ENCODE measurements at regions of chr7 and their contacts with region 1.

Region 1: GRCh38 chr7:135936530-135937217 is 40.5 kb downstream of the MTPN start:
- DNase-seq: peak in 1 of 2 experiments; percentile 54
- H3K4me3 ChIP-seq: no peak overlapping the region
- H3K4me3 Mint-ChIP-seq: peak overlapping the region; percentile 18
- H3K27ac Mint-ChIP-seq: no peak overlapping the region
- H3K4me1 ChIP-seq: peaks cover 52% of the 10 kb centered on the region
- H3K4me1 Mint-ChIP-seq: peaks cover 49% of the 10 kb centered on the region
- H3K27me3 ChIP-seq: no peaks in the 10 kb centered on the region
- H3K27me3 Mint-ChIP-seq: no peaks in the 10 kb centered on the region
- CTCF ChIP-seq: no peak

Region 2: DNA sequence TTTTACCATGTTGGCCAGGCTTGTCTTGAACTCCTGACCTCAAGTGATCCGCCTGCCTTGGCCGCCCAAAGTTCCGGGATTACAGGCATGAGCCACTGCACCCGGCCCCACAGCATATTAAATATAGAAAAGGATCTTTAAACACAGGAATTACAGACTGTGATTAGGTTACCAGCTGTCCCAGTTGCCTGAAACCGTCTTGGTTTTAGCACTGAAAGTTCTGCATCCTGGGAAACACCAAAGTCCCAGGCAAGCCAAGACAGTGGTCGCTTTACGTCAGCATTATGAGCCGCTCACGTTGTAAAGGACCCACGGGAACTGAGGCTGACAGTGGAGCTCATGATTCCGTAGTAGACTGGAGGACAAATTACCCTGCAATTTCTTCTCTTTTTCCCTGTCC is 119.1 kb before region 1 on chr7:
- CTCF ChIA-PET with region 1: no interaction called
- POLR2A ChIA-PET with region 1: no interaction called
- intact Hi-C with region 1: no loop called
- DNase-seq: no peak
- H3K4me3 ChIP-seq: no peak overlapping the region
- H3K4me3 Mint-ChIP-seq: no peak overlapping the region
- H3K27ac Mint-ChIP-seq: no peak overlapping the region
- H3K4me1 ChIP-seq: no peaks in the 10 kb centered on the region
- H3K4me1 Mint-ChIP-seq: no peaks in the 10 kb centered on the region
- H3K27me3 ChIP-seq: no peaks in the 10 kb centered on the region
- H3K27me3 Mint-ChIP-seq: no peaks in the 10 kb centered on the region
- CTCF ChIP-seq: no peak

Region 3: GRCh38 chr7:135843214-135843613 is 93.5 kb before region 1 on chr7:
- CTCF ChIA-PET with region 1: no interaction called
- POLR2A ChIA-PET with region 1: no interaction called
- intact Hi-C with region 1: no loop called
- DNase-seq: no peak
- H3K4me3 ChIP-seq: no peak overlapping the region
- H3K4me3 Mint-ChIP-seq: no peak overlapping the region
- H3K27ac Mint-ChIP-seq: no peak overlapping the region
- H3K4me1 ChIP-seq: no peaks in the 10 kb centered on the region
- H3K4me1 Mint-ChIP-seq: peaks cover 9% of the 10 kb centered on the region
- H3K27me3 ChIP-seq: no peaks in the 10 kb centered on the region
- H3K27me3 Mint-ChIP-seq: no peaks in the 10 kb centered on the region
- CTCF ChIP-seq: no peak

Region 4: DNA sequence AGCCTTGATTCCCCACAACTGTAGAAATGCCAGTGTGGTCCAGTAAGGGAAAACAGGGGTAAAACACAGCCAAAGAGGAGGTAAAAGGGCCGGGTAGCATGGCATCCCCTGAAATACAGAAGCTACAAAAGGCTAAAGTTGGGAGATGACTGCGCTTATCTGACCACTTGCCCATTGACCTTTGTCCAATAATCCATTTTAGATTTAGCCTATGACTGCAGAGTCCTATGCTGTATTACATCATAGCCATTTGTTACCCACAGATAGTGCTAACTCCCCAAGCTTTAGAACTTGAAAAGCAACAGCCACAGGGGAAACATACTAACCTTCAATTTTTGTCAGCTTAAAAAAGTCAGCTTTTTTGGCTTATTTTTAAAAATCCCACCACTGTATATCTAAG is 14.3 kb after region 1 on chr7:
- CTCF ChIA-PET with region 1: interaction called, 4 read pairs
- POLR2A ChIA-PET with region 1: no interaction called
- intact Hi-C with region 1: loop called (anchors 1 kb)
- DNase-seq: no peak
- H3K4me3 ChIP-seq: no peak overlapping the region
- H3K4me3 Mint-ChIP-seq: no peak overlapping the region
- H3K27ac Mint-ChIP-seq: no peak overlapping the region
- H3K4me1 ChIP-seq: peaks cover 10% of the 10 kb centered on the region; the same call in 1 of the 2 replicates
- H3K4me1 Mint-ChIP-seq: peaks cover 6% of the 10 kb centered on the region
- H3K27me3 ChIP-seq: no peaks in the 10 kb centered on the region
- H3K27me3 Mint-ChIP-seq: no peaks in the 10 kb centered on the region
- CTCF ChIP-seq: no peak

Region 5: GRCh38 chr7:135965602-135966001 is 28.9 kb after region 1 on chr7:
- CTCF ChIA-PET with region 1: no interaction called
- POLR2A ChIA-PET with region 1: no interaction called
- intact Hi-C with region 1: no loop called
- DNase-seq: no peak
- H3K4me3 ChIP-seq: no peak overlapping the region
- H3K4me3 Mint-ChIP-seq: no peak overlapping the region
- H3K27ac Mint-ChIP-seq: no peak overlapping the region
- H3K4me1 ChIP-seq: peaks cover 10% of the 10 kb centered on the region; the same call in 1 of the 2 replicates
- H3K4me1 Mint-ChIP-seq: peaks cover 8% of the 10 kb centered on the region
- H3K27me3 ChIP-seq: no peaks in the 10 kb centered on the region
- H3K27me3 Mint-ChIP-seq: no peaks in the 10 kb centered on the region
- CTCF ChIP-seq: no peak

Region 6: DNA sequence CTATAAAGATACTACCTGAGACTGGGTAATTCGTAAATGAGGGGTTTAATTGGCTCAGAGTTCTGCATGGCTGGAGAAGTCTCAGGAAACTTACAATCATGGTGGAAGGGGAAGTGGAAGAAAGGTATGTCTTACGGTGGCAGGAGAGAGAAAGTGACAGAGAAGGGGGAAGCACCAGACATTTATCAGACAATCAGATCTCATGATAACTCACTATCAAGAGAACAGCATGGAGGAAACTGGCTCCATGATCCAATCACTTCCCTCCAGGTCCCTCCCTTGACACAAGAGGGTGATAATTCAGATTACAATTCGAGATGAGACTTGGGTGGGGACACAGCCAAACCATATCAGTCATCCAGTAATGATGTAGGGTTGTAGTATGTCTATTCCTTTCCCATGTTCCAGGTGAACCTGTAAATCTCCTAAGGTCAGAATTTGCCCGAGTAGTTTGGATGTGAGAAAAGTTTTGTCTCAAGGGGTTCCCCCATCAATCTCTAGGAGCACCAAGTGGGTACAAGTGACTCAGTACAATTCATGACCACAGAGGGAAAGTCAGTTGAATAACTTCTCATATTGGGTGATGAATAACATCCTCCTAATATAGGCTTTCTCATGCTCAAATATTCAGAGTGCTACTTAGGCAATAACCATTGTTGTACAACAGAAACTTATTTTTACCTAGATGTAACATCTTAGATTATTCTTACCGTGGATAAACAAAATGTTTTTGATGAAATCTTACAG is 80.1 kb after region 1 on chr7:
- CTCF ChIA-PET with region 1: no interaction called
- POLR2A ChIA-PET with region 1: no interaction called
- intact Hi-C with region 1: no loop called
- DNase-seq: no peak
- H3K4me3 ChIP-seq: no peak overlapping the region
- H3K4me3 Mint-ChIP-seq: no peak overlapping the region
- H3K27ac Mint-ChIP-seq: no peak overlapping the region
- H3K4me1 ChIP-seq: no peaks in the 10 kb centered on the region
- H3K4me1 Mint-ChIP-seq: no peaks in the 10 kb centered on the region
- H3K27me3 ChIP-seq: no peaks in the 10 kb centered on the region; the same call in 1 of the 2 replicates
- H3K27me3 Mint-ChIP-seq: peaks cover 11% of the 10 kb centered on the region
- CTCF ChIP-seq: no peak